Ovary (tissue), 10 donors: ENCODE measurements at regions of chr22 and their contacts with region 1.

Region 1: DNA sequence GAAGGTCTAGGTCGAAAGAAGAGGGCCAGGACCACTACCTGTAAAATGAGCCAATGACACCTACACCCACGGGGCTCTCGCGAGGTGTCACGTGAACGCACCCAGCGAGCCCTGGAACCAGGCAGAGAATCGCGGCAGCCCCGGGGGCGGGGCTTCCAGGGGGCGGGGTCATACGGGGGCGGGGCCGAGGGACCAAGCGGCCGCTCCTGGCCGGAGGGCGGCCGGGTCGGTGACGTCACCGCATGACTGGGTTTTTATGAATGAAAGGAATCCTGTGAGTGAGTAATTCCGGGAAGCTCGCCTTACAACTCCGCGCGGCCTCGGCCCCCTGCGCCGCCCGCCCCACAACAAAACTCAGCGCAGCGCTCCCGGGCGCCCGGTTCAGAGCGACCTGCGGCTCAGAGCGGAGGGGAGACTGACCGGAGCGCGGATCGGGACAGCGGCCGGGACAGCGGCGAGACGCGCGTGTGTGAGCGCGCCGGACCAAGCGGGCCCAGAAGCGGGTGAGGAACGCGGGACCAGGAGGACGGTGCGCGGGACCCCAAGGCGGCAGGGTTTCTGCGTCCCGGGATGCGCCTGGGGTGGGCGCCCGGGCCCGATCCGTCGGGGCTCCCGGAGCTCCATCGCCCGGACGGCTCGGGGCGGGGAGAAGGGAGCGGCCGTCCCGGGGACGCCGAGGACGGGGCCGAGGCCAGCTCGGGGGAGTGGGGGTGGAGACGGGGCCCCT is at the start of gene MAFF:
- DNase-seq: peak; percentile 98 to 99 (median 99)
- H3K4me3 ChIP-seq: peak within 1 kb of the TSS; percentile 99
- H3K27ac ChIP-seq: peak within 1 kb of the TSS; percentile 99 to 100
- H3K4me1 ChIP-seq: peaks cover 22% of the 10 kb centered on the region
- H3K27me3 ChIP-seq: no peaks in the 10 kb centered on the region
- CTCF ChIP-seq: no peak
- EP300 ChIP-seq: peak; percentile 84
- POLR2A ChIP-seq: peak; percentile 97
- total RNA-seq, gene MAFF: 15.0 to 153 (median 19.4) TPM

Region 2: DNA sequence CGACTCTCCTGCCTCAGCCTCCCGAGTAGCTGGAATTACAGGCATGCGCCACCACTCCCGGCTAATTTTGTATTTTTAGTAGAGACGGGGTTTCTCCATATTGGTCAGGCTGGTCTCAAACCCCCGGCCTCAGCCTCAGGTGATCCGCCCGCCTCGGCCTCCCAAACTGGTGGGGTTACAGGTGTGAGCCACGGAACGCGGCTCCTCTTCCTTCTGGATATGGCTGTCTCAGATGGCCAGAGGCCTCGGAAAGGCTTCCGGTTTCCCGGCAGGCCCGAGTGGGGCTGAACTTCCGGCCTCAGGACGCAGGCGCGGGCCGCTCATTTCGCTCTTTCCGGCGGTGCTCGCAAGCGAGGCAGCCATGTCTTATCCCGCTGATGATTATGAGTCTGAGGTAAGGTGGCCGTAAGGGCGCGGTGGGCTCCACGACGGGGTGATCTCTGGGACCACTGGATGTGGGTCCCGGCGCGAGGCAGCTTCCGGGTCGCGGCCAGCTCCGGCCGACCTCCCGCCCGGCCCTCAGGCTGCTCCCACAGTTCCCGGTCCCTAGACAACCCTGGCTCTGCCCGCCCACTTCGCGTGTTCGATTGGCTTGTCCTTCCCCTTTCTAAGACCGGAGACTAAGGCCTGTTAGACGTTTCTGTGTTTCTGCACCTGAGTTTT is 352.7 kb before region 1 on chr22 and contains the start of gene EIF3L:
- intact Hi-C with region 1: loop called in 1 of 4 experiments (anchors 10 kb)
- DNase-seq: peak; percentile 85 to 92 (median 87)
- H3K4me3 ChIP-seq: peak within 1 kb of the TSS; percentile 59
- H3K27ac ChIP-seq: peak within 1 kb of the TSS; percentile 47 to 66
- H3K4me1 ChIP-seq: peaks cover 5% of the 10 kb centered on the region
- H3K27me3 ChIP-seq: no peaks in the 10 kb centered on the region
- CTCF ChIP-seq: no peak
- EP300 ChIP-seq: peak; percentile 14
- POLR2A ChIP-seq: peak; percentile 86
- total RNA-seq, gene EIF3L: 534 to 1,344 (median 896) TPM

Region 3: DNA sequence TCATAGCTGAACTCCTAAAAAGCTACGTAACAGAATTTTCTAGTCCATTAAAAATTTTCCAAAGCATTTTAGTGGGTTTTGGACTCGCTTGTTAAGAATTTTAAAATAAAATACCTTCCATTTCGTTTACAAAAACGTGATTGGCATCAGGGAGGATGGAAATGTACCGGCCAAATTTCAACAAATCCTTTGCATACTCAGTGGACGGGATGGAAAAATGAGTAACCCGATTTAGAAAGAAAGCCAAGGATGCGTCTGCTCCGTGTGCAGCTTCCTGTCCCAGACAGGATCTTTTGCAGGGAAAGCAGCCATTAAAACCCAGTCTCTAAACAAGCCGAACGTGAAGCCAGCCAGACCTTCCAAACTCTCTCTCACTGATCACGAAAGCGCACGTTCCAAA is 55.3 kb after region 1 on chr22:
- intact Hi-C with region 1: loop called in 2 of 4 experiments (anchors 10 kb)
- DNase-seq: peak in 1 of 5 donors; percentile 51
- H3K4me3 ChIP-seq: no peak overlapping the region
- H3K27ac ChIP-seq: peak overlapping the region; percentile 31 to 74
- H3K4me1 ChIP-seq: peaks cover 14% of the 10 kb centered on the region
- H3K27me3 ChIP-seq: no peaks in the 10 kb centered on the region
- CTCF ChIP-seq: no peak
- EP300 ChIP-seq: no peak
- POLR2A ChIP-seq: no peak

Region 4: GRCh38 chr22:38262051-38262795 is 60.4 kb after region 1 on chr22:
- intact Hi-C with region 1: loop called in 2 of 4 experiments (anchors 10 kb)
- DNase-seq: peak in 4 of 5 donors; percentile 46 to 74 (median 56)
- H3K4me3 ChIP-seq: no peak overlapping the region
- H3K27ac ChIP-seq: peak overlapping the region; percentile 32 to 46
- H3K4me1 ChIP-seq: peaks cover 27% of the 10 kb centered on the region
- H3K27me3 ChIP-seq: no peaks in the 10 kb centered on the region
- CTCF ChIP-seq: peak in 1 of 3 donors; percentile 35
- EP300 ChIP-seq: no peak
- POLR2A ChIP-seq: no peak

Region 5: DNA sequence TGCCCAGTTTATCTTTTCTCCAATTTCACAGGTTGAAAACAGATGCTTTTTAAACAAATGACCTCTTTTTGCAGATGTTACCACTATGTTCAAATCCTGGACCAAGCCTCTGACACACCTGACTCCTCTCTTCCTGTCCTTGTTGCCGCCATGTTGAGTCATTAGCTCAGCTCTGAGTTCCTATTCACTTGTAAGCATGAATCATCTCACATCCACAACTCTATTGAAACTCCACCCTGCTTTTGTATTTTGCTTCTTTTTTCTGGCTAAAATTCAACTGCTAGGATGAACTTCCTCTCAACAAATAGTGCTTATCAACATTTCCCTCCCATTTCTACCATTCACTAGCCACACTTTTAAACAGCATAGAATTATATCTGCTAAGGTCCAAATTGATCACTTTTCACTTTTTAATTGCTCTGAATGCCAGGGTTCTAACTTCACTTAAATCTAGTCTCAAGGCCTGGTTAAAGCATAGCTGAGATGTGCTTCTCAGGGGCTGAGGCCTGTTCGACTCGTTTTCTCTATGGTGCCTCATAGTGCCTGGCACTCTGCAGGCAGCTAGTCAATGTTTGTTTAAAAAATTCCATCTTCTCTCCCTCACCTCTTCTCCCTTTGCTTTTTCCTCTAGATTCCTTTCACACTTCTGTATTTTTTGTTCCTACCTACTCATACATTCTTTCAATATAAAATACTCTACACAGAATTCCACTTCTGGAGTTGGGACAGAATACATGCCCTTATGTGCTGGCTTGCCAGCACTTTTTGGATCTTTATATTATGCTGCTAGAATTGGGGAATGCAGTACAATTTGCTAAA is 494.9 kb after region 1 on chr22:
- intact Hi-C with region 1: no loop called
- DNase-seq: no peak
- H3K4me3 ChIP-seq: no peak overlapping the region
- H3K27ac ChIP-seq: no peak overlapping the region
- H3K4me1 ChIP-seq: peaks cover 14% of the 10 kb centered on the region
- H3K27me3 ChIP-seq: no peaks in the 10 kb centered on the region
- CTCF ChIP-seq: no peak
- EP300 ChIP-seq: no peak
- POLR2A ChIP-seq: no peak